Naive thymus-derived CD8-positive, alpha-beta T cell (primary cell): ENCODE measurements at regions of chr2 and their contacts with region 1.

Region 1: DNA sequence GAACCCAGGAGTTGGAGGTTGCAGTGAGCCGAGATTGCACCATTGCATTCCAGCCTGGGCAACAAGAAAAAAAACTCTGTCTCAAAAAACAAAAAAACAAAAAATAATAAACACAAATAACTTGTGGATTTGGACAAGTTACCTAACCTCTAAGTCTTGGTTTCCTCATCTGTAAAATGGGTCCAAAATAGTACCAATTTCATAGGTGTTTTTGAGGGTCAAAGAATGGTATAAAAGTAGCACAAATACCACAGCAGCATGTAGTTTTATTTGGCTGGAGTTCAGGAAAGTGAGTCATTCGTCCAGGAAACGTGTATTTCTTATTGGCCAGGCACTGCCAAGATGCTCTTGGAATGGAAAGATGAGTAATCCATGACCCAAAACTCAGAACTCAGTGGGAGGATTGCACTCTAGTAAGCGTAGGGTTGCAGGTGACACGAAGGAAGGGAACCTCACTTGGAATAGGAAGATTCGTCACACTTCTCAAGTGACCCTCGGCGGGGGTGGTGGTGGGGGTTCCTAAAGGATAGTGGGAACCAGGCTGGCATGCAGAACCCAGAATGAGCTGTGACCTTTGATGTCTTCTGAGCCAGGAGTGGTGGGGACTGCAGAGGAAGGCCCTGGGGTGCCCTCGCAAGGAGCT is 24.4 kb downstream of the GRHL1 start:
- DNase-seq: no peak
- ATAC-seq: no peak
- H3K4me3 Mint-ChIP-seq: no peak overlapping the region
- H3K27ac Mint-ChIP-seq: no peak overlapping the region
- H3K4me1 Mint-ChIP-seq: peaks cover 2 to 9% (median 6%) of the 10 kb centered on the region in 4 donors
- H3K27me3 Mint-ChIP-seq: peaks cover 5 to 21% (median 13%) of the 10 kb centered on the region in 5 donors

Region 2: GRCh38 chr2:10566018-10566417 is 590.1 kb after region 1 on chr2:
- POLR2A ChIA-PET with region 1: interaction called, 10 read pairs
- DNase-seq: no peak
- ATAC-seq: no peak
- H3K4me3 Mint-ChIP-seq: no peak overlapping the region
- H3K27ac Mint-ChIP-seq: no peak overlapping the region
- H3K4me1 Mint-ChIP-seq: peaks cover 0 to 3% (median 1%) of the 10 kb centered on the region in 4 donors
- H3K27me3 Mint-ChIP-seq: no peaks in the 10 kb centered on the region